Mammary epithelial cell (primary cell): ENCODE measurements at regions of chr1 and their contacts with region 1.

Region 1: GRCh38 chr1:91165033-91165654 is 143.3 kb upstream of the ZNF644 start:
- DNase-seq: peak; percentile 36
- H3K4me3 ChIP-seq: no peak overlapping the region
- H3K27ac ChIP-seq: no peak overlapping the region
- H3K4me1 ChIP-seq: no peaks in the 10 kb centered on the region
- H3K27me3 ChIP-seq: no peaks in the 10 kb centered on the region
- CTCF ChIP-seq: peak; percentile 98 to 99

Region 2: DNA sequence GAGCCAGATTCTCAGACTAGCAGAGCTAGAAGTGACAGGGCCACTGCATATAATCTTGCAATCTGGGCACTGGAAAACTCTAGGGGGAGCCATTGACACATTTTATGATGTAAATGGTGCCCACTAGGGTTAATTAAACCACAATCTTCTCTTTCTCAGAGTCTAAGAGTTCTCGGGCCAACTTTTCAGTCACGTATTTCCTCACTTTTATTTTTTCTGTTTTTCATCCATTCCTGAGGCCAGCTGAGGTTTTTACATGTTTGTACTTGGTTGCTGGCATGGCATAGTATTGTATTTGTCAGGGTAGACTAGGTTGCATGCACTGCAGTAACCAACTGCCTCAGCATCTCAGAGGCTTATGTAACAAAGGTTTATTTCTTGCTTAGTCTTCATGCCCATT is 1032.0 kb before region 1 on chr1:
- CTCF ChIA-PET with region 1: no interaction called
- dilution Hi-C with region 1: no loop called
- in situ Hi-C with region 1: no loop called
- intact Hi-C with region 1: loop called (anchors 5 kb)
- DNase-seq: peak; percentile 63
- H3K4me3 ChIP-seq: no peak overlapping the region
- H3K27ac ChIP-seq: no peak overlapping the region
- H3K4me1 ChIP-seq: no peaks in the 10 kb centered on the region
- H3K27me3 ChIP-seq: peaks cover 3% of the 10 kb centered on the region
- CTCF ChIP-seq: peak; percentile 64 to 71

Region 3: GRCh38 chr1:90616395-90616794 is 548.7 kb before region 1 on chr1:
- CTCF ChIA-PET with region 1: no interaction called
- dilution Hi-C with region 1: no loop called
- in situ Hi-C with region 1: no loop called
- intact Hi-C with region 1: loop called (anchors 5 kb)
- DNase-seq: peak; percentile 14
- H3K4me3 ChIP-seq: no peak overlapping the region
- H3K27ac ChIP-seq: no peak overlapping the region
- H3K4me1 ChIP-seq: no peaks in the 10 kb centered on the region
- H3K27me3 ChIP-seq: no peaks in the 10 kb centered on the region
- CTCF ChIP-seq: peak; percentile 34 to 51

Region 4: DNA sequence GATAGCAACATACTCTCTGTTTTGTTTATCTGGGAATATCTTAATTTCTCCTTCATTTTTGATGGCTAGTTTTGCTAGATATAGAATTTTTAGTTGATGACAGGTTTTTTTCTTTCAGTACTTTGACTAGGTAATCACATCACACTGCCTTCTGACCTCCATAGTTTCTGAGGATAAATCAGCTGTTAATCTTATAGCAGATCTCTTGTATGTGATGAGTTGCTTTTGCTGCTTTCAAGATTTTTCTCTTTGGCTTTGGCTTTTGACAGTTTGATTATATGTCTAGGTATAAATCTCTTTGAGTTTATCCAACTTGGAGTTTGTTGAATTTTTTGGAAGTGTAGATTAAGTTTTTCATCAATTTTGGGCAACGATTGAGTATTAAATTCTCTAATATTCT is 285.9 kb before region 1 on chr1:
- CTCF ChIA-PET with region 1: no interaction called
- dilution Hi-C with region 1: no loop called
- in situ Hi-C with region 1: no loop called
- intact Hi-C with region 1: no loop called
- DNase-seq: no peak
- H3K4me3 ChIP-seq: no peak overlapping the region
- H3K27ac ChIP-seq: no peak overlapping the region
- H3K4me1 ChIP-seq: no peaks in the 10 kb centered on the region
- H3K27me3 ChIP-seq: no peaks in the 10 kb centered on the region
- CTCF ChIP-seq: no peak

Region 5: DNA sequence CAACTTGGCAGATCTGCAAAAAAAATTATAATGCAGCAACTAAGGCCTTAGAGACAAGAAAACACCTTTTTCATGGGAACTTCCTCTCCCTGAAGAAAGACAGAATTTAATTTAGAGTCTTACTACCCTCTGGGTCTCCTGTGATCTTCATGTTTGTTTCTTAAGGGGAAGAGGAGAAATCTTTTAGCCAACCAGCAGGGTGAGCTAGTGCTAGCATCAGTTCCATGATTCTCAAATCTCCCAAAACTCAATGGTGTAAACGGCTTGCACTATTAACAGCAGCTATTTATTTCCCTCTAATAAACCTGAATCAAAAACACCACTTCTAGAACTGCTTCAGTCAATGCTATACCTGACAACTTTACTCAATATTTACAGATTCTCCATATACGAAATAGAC is 147.1 kb before region 1 on chr1:
- CTCF ChIA-PET with region 1: interaction called, 6 read pairs
- dilution Hi-C with region 1: no loop called
- in situ Hi-C with region 1: no loop called
- intact Hi-C with region 1: loop called (anchors 1 kb)
- DNase-seq: no peak
- H3K4me3 ChIP-seq: no peak overlapping the region
- H3K27ac ChIP-seq: no peak overlapping the region
- H3K4me1 ChIP-seq: peaks cover 34% of the 10 kb centered on the region
- H3K27me3 ChIP-seq: no peaks in the 10 kb centered on the region
- CTCF ChIP-seq: peak; percentile 27 to 42

Region 6: GRCh38 chr1:91141858-91142257 is 23.3 kb before region 1 on chr1:
- CTCF ChIA-PET with region 1: no interaction called
- dilution Hi-C with region 1: no loop called
- in situ Hi-C with region 1: no loop called
- intact Hi-C with region 1: no loop called
- DNase-seq: no peak
- H3K4me3 ChIP-seq: no peak overlapping the region
- H3K27ac ChIP-seq: no peak overlapping the region
- H3K4me1 ChIP-seq: no peaks in the 10 kb centered on the region
- H3K27me3 ChIP-seq: peaks cover 2% of the 10 kb centered on the region
- CTCF ChIP-seq: no peak

Region 7: GRCh38 chr1:91314643-91315042 is 149.5 kb after region 1 on chr1:
- CTCF ChIA-PET with region 1: no interaction called
- dilution Hi-C with region 1: no loop called
- in situ Hi-C with region 1: no loop called
- intact Hi-C with region 1: no loop called
- DNase-seq: no peak
- H3K4me3 ChIP-seq: no peak overlapping the region
- H3K27ac ChIP-seq: no peak overlapping the region
- H3K4me1 ChIP-seq: no peaks in the 10 kb centered on the region
- H3K27me3 ChIP-seq: no peaks in the 10 kb centered on the region
- CTCF ChIP-seq: no peak

Region 8: DNA sequence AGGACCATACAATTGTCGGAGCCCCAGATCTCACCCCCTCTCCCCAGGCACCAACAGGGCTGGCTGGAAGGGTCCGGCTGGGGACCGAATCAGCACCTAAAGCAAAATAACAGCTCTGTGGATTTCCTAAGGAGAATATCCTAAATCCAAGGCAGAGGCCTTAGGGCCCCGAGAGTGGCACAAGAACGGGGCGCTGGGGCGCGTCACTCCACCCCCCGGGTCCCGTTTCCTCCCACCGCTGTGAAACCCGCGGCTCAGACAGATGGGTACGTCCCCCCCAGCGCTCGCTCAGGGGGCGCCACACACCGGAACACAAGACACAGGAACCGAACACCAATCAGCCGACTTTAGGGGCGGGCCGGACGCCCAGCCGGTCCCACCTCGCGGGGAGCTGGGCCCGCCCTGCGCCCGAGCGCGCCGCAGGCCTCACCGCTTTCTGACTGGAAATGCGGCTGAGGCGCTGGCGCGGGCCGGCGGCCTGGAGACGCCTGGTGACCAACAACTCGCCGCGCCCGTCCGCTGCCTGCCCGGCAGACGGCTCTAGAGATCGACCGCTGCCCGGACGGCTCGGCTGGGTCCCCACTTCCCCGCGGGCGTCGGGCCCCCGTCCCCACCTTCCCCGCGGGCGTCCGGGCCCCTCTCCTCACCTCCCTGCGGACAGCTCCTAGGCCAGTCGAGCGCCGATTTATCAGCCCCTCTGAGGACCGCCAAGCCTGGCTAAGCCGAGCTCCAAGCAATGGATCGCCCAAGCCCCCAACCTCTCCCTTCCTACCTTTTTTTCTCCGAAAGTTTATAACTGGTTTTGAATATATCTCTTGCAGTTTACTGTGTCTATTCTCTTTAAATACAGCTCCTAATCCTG is 239.2 kb after region 1 on chr1 and contains the start of gene HFM1:
- CTCF ChIA-PET with region 1: no interaction called
- dilution Hi-C with region 1: no loop called
- in situ Hi-C with region 1: no loop called
- intact Hi-C with region 1: loop called (anchors 2 kb)
- DNase-seq: peak; percentile 52
- H3K4me3 ChIP-seq: peak within 1 kb of the TSS; percentile 50 to 66 (median 61)
- H3K27ac ChIP-seq: no peak within 1 kb of the TSS
- H3K4me1 ChIP-seq: peaks cover 5% of the 10 kb centered on the region
- H3K27me3 ChIP-seq: peaks cover 4% of the 10 kb centered on the region
- CTCF ChIP-seq: no peak
- total RNA-seq, gene HFM1: 0.83 TPM in 1 of 2 donors, not detected in the other

Region 9: DNA sequence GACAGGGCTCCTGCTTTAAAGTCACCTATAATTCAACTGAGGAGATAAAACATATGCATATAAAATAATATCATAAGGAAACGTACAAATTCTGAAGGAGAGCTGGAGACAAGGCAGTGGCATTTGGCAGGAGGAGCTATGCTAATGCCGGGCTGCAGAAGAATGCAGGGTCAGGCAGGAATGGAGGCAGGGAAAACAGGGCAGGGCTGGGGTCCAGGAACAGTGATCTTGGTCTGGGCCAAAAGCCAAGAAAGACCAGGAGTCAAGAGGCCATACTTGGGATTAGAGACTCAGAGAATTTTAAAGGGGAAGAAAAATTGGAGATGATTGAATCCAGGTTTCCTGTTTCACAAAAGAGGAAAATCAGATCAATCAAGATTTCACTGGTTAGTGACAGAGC is 764.1 kb after region 1 on chr1:
- CTCF ChIA-PET with region 1: no interaction called
- dilution Hi-C with region 1: no loop called
- in situ Hi-C with region 1: no loop called
- intact Hi-C with region 1: loop called (anchors 5 kb)
- DNase-seq: no peak
- H3K4me3 ChIP-seq: no peak overlapping the region
- H3K27ac ChIP-seq: no peak overlapping the region
- H3K4me1 ChIP-seq: no peaks in the 10 kb centered on the region
- H3K27me3 ChIP-seq: no peaks in the 10 kb centered on the region
- CTCF ChIP-seq: no peak